H1 (cell line): ENCODE measurements at regions of chr19 and their contacts with region 1.

Region 1: DNA sequence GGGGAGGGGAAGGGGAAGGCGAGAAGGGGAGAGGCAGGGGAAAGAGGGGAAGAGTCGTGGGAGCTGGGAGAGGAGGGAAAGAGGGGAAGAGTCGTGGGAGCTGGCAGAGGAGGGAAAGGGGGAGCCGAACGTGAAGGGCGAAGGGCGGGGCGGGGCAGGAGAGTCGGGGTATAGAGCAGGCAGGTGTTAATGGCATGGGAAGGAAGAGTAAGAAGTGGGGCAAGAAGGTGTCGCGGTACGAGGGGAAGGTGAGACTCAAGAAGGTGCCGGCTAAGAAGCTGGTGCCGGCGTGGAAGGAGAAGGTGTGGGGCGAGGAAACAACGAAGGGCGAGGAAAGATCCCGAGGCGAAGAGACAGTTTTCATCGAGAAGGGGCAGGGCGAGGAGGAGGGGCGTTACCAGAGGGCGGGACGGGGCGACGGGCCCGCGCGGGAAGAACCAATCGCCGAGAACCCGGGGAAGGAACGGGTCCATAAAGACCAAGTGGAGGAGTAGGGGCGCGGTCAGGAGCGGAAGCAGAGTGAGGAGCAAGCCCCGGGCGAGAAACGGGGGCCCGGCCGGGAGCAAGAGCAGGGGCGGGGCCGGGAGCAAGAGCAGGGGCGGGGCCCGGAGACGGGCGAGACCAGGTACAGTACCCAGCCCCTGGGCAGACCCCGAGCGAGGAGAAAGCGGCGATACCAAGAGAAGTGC is 463 bp downstream of the CATSPERG start:
- DNase-seq: peak; percentile 79 to 92
- H3K4me3 ChIP-seq: peak overlapping the region; percentile 66 to 86 (median 75)
- H3K27ac ChIP-seq: no peak overlapping the region
- H3K4me1 ChIP-seq: peaks cover 0 to 5% (median 4%) of the 10 kb centered on the region in 4 experiments; a peak in 5 of 7 replicates
- H3K27me3 ChIP-seq: no peaks in the 10 kb centered on the region
- CTCF ChIP-seq: no peak
- EP300 ChIP-seq: no peak
- POLR2A ChIP-seq: no peak
- RAD21 ChIP-seq: no peak

Region 2: GRCh38 chr19:38095411-38096308 is 240.4 kb before region 1 on chr19:
- CTCF ChIA-PET with region 1: no interaction called
- POLR2A ChIA-PET with region 1: no interaction called
- DNase-seq: peak; percentile 44 to 85
- H3K4me3 ChIP-seq: no peak overlapping the region
- H3K27ac ChIP-seq: no peak overlapping the region
- H3K4me1 ChIP-seq: peaks cover 0 to 2% (median 0%) of the 10 kb centered on the region in 4 experiments; a peak in 3 of 7 replicates
- H3K27me3 ChIP-seq: no peaks in the 10 kb centered on the region
- CTCF ChIP-seq: peak; percentile 77 to 95 (median 93)
- EP300 ChIP-seq: no peak
- POLR2A ChIP-seq: no peak
- RAD21 ChIP-seq: peak; percentile 77

Region 3: GRCh38 chr19:38229585-38230073 is 106.5 kb before region 1 on chr19:
- CTCF ChIA-PET with region 1: interaction called, 31 read pairs
- POLR2A ChIA-PET with region 1: interaction called, 5 read pairs
- DNase-seq: peak in 1 of 2 experiments; percentile 85
- H3K4me3 ChIP-seq: peak overlapping the region; percentile 5 to 86 (median 40); a peak in 5 of 8 replicates
- H3K27ac ChIP-seq: no peak overlapping the region
- H3K4me1 ChIP-seq: peaks cover 6 to 19% (median 13%) of the 10 kb centered on the region in 4 experiments
- H3K27me3 ChIP-seq: peaks cover 0 to 10% (median 5%) of the 10 kb centered on the region in 4 experiments; a peak in 3 of 7 replicates
- CTCF ChIP-seq: no peak
- EP300 ChIP-seq: no peak
- POLR2A ChIP-seq: no peak
- RAD21 ChIP-seq: no peak

Region 4: DNA sequence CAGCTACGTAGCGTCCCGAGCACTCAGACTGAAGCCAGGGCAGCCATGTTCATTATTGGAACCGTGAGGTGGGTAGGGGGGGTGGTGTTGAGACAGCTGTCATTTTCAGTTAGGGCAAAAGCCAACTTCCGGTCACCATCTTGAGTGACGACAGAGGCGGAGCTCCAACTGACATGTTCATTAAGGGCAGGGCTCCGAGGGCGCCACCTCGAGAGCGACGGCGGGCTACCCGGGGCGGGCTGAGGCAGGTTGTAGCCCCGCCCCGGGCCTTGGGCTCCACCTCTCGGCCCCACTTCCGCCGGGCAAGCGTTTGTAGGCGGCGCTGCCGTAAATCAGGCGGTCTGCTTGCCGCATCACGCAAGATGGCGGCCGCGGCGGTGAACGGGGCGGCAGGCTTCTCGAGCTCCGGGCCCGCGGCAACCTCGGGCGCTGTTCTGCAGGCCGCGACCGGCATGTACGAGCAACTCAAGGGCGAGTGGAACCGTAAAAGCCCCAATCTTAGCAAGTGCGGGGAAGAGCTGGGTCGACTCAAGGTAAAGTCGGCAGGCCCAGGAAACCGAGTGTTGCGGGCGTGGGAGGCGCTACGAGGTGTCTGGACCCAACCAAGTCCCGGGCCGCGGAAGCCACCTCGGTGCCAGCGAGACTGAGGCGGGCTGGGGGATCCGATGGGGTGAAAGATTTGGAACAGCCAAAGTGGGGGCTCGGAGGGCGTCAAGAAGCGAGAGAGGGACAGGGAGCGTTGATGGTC is 38.5 kb after region 1 on chr19 and contains the start of gene PSMD8:
- CTCF ChIA-PET with region 1: interaction called, 6 read pairs
- POLR2A ChIA-PET with region 1: interaction called, 10 read pairs
- DNase-seq: peak; percentile 96 to 99
- H3K4me3 ChIP-seq: peak within 1 kb of the TSS; percentile 85 to 96 (median 90)
- H3K27ac ChIP-seq: peak within 1 kb of the TSS; percentile 62; the same call in 1 of the 2 replicates
- H3K4me1 ChIP-seq: peaks cover 0 to 6% (median 3%) of the 10 kb centered on the region in 4 experiments; a peak in 3 of 7 replicates
- H3K27me3 ChIP-seq: peaks cover 0 to 2% (median 0%) of the 10 kb centered on the region in 4 experiments; a peak in 2 of 7 replicates
- CTCF ChIP-seq: peak in 2 of 3 experiments; percentile 14 to 25; a peak in 2 of 4 replicates
- EP300 ChIP-seq: no peak
- POLR2A ChIP-seq: peak; percentile 93 to 94
- RAD21 ChIP-seq: peak; percentile 10 to 13; a peak in 3 of 4 replicates
- total RNA-seq, gene PSMD8: 170 and 183 TPM in 2 replicates